ENCODE measurements at regions of chr1 and their contacts with region 1.

Region 1: GRCh38 chr1:226308723-226309315 is at the start of gene LIN9:
- DNase-seq: peak; percentile 95

Region 2: DNA sequence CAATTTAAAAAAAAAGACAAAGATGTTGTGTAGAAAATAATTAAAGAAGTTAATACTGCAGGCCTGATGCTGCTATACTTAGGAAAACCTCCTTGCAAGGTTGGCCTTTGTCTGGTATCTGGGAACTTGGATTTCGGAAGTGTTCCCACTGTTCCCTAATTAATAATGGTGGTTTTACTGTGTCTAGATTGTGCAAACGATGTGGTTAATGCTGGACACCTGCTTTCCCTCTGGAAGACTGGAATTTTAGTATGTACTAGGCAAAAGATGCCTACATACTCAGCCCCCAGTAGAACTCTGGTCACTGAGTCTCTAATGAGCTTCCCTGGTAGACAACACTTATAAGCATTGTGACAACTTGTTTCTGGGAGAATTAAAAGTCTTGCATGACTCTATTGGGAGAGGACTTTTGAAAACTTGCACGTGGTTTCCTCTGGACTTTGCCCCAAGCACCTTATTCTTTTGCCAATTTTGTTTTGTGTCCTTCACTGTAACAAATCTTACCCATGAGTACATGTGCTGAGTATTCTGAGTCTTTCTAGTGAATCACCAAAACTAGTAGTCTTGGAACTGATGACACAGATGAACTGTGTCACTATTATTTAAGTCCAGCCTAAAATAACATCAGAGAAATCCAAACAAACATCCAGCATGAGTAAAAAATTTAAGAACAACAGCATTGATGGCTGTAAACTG is 40.2 kb before region 1 on chr1:
- CTCF ChIA-PET with region 1: no interaction called
- POLR2A ChIA-PET with region 1: interaction called, 17 read pairs
- DNase-seq: no peak

Region 3: DNA sequence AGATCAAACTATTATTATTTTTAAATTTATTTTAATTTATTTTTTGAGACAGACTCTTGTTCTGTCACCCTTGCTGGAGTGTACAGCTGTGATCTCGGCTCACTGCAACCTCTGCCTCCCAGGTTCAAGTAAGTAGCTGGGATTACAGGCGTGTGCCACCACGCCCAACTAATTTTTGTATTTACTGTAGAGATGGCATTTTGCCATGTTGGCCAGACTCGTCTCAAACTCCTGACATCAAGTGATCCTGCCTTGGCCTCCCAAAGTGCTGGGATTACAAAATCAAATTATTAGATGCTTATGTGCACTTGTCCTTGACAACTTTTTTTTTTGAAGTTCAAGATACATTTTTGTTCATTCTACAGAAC is 15.3 kb before region 1 on chr1:
- CTCF ChIA-PET with region 1: interaction called, 3 read pairs
- POLR2A ChIA-PET with region 1: interaction called, 20 read pairs
- DNase-seq: no peak

Region 4: DNA sequence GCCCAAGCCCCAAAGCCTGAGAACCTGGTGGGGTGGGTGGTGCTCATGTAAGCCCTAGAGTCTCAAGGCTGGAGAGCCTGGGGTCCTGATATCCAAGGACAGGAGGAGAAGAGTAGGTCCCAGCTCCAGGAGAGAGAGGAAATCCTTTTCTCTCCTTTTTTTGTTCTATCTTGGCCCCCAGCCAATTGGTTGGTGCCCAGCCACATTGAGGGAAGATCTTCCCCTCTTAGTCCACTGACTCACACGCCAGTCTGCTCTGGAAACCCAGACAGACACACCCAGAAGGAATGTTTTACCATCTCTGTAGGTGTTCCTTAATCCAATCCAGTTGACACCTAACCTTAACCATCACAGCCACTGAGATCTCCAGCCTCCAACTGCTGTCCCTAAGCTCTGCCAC is 16.4 kb after region 1 on chr1:
- CTCF ChIA-PET with region 1: interaction called, 3 read pairs
- POLR2A ChIA-PET with region 1: interaction called, 39 read pairs
- DNase-seq: no peak

Region 5: DNA sequence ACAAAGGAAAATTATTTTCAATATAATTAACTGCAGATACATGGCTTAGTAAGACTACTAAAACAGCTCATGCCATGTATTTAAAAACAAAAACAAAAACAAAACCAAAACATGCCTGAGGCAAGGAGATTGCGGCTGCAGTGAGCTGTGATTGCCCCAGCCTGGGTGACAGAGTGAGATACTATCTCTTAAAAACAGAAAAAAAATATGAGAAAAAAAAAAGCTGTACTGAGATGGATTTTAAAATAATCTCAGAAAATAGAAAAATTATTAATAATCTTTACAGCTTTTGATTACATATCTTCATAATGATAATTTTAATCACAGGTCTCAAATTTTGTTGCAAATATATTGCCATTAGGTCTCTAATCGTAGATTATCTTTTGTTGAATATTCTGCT is 24.1 kb after region 1 on chr1:
- CTCF ChIA-PET with region 1: interaction called, 9 read pairs
- POLR2A ChIA-PET with region 1: interaction called, 39 read pairs
- DNase-seq: no peak

Region 6: GRCh38 chr1:226371027-226371694 is 62.3 kb after region 1 on chr1:
- CTCF ChIA-PET with region 1: no interaction called
- POLR2A ChIA-PET with region 1: interaction called, 10 read pairs
- DNase-seq: no peak

Region 7: GRCh38 chr1:226407497-226408284 is 98.9 kb after region 1 on chr1 and contains the start of gene PARP1:
- CTCF ChIA-PET with region 1: no interaction called
- POLR2A ChIA-PET with region 1: interaction called, 16 read pairs
- DNase-seq: peak; percentile 99

Measured in HEK293T (cell line).